ENCODE measurements at regions of chr7 and their contacts with region 1.

Region 1: GRCh38 chr7:92609921-92610518 is 19.8 kb upstream of the FAM133B start:
- DNase-seq: no peak
- H3K4me3 ChIP-seq: no peak overlapping the region
- H3K27ac ChIP-seq: no peak overlapping the region
- H3K4me1 ChIP-seq: no peaks in the 10 kb centered on the region
- H3K27me3 ChIP-seq: no peaks in the 10 kb centered on the region
- CTCF ChIP-seq: peak in 2 of 4 experiments; percentile 8 to 23
- POLR2A ChIP-seq: no peak

Region 2: DNA sequence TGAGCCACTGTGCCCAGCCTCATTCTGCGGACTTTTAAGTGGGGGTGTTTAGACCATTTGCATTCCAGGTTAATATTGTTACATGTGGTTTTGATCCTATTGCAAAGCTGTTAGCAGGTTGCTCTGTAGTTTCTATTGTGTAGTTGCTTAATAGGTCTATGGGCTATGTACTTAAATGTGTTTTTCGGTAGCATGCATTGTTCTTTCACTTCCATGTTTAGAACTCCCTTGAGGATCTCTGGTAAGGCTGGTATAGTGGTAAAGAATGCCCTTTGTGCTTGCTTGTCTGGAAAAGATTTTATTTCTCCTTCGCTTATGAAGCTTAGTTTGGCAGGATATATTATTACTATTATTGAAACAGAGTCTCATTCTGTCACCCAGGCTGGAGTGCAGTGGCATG is 417.7 kb before region 1 on chr7:
- intact Hi-C with region 1: no loop called
- DNase-seq: no peak
- H3K4me3 ChIP-seq: no peak overlapping the region
- H3K27ac ChIP-seq: no peak overlapping the region
- H3K4me1 ChIP-seq: no peaks in the 10 kb centered on the region
- H3K27me3 ChIP-seq: no peaks in the 10 kb centered on the region
- CTCF ChIP-seq: no peak
- POLR2A ChIP-seq: no peak

Region 3: GRCh38 chr7:93055543-93056107 is 445.6 kb after region 1 on chr7:
- intact Hi-C with region 1: loop called (anchors 10 kb)
- DNase-seq: no peak
- H3K4me3 ChIP-seq: no peak overlapping the region
- H3K27ac ChIP-seq: no peak overlapping the region
- H3K4me1 ChIP-seq: no peaks in the 10 kb centered on the region
- H3K27me3 ChIP-seq: no peaks in the 10 kb centered on the region
- CTCF ChIP-seq: peak; percentile 56 to 72 (median 65)
- POLR2A ChIP-seq: no peak